GM10248 (cell line): ENCODE measurements at regions of chr5 and their contacts with region 1.

Region 1: GRCh38 chr5:171907725-171908343 is 98.6 kb downstream of the FBXW11 start:
- DNase-seq: peak; percentile 25
- CTCF ChIP-seq: peak; percentile 73

Region 2: DNA sequence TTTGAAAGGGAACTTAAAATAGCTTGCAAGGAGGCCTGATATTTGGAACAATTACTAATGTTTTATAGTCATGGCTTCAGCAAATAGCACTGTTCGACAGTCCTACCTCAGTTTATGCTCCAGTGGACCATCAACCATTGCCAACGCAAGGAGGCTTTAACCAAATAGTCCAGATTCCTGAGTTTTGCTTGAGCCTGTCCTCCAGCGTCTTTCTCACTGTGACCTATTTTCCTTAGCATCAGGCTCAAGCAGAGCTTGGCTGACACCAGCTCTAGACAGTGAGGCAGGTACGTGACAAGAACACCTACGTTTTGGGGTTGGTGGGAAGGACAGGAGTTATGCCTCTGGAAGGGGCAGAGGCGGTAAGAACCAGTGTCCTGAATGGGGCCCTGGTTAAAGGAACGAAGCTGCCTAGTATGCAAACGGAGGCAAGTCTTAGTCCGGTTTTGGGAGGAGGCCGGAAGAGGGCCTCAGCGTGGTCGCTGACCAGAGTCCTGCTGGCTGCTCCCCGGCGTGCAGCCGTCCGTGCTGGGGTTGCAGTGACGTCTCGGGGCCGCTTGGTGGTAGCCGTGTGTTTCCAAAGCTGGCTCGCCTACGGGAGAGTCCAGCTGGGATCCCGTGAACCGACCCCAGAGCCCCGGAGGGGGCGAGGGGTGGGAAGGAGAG is 489.4 kb before region 1 on chr5:
- CTCF ChIA-PET with region 1: interaction called, 35 read pairs
- POLR2A ChIA-PET with region 1: no interaction called
- DNase-seq: peak; percentile 88
- CTCF ChIP-seq: peak; percentile 95

Region 3: GRCh38 chr5:171484460-171484899 is 423.4 kb before region 1 on chr5:
- CTCF ChIA-PET with region 1: interaction called, 13 read pairs
- POLR2A ChIA-PET with region 1: no interaction called
- DNase-seq: peak; percentile 72
- CTCF ChIP-seq: peak; percentile 63

Region 4: DNA sequence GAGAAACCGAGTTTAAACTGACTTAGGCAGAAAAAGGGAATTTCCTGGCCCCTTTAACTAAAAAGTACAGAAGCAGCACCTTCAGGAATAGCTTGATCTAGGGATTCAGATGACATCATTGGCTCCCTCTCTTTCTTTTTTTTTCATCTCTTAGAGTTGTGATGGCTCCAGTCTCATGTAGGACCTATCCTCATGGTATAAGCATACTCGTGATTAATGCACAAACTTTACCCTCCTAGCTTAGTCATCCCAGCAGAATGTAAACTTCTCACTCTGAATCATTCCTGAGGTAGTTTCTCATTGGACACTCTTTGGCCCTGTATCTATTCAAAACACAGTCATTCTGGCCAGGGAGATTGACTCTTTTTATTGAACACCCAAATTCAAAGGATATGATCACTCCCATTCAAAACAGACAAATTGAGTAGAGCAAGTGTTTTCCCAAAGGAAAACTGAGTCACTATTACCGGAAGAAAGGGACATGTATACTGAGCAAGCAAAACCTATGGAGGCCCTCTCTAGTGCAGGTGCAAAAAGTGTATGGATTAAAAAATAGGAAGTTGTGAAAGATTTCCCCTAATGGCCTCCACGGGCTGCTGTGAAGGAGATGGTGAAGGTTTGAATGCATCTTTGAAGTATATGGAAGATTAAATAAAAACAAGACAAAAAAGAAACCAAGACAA is 149.8 kb before region 1 on chr5:
- CTCF ChIA-PET with region 1: no interaction called
- POLR2A ChIA-PET with region 1: no interaction called
- DNase-seq: no peak
- CTCF ChIP-seq: no peak

Region 5: DNA sequence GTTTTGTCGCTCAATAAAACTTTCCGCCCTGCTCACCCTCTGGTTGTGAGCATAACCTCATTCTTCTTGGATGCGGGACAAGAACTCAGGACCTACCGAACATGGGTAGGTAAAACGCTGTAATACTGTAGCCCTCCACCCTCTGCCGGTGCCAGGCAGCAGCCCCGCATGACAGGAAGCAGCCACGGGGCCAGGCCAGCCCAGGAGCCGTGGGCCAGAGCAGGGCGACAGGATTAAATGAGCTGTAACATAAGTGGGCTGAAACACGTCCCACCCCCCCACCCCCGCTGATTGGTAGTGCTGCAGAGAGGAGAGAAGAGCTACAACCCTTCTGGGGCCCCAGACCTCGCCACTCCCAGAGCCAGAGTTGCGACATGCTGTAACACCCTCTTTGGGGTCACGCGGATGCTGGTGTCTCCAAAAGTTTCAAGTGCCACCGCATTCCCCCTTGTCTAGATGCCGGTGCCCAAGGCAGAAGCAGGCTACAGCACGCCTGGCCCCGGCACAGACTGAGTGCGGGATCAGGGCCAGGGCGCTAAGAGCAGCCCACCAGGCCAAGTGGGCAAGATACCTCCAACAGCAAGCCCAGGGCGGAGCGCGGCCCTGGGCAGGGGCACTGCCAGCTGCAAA is 16.8 kb after region 1 on chr5:
- CTCF ChIA-PET with region 1: interaction called, 43 read pairs
- POLR2A ChIA-PET with region 1: no interaction called
- DNase-seq: no peak
- CTCF ChIP-seq: no peak

Region 6: DNA sequence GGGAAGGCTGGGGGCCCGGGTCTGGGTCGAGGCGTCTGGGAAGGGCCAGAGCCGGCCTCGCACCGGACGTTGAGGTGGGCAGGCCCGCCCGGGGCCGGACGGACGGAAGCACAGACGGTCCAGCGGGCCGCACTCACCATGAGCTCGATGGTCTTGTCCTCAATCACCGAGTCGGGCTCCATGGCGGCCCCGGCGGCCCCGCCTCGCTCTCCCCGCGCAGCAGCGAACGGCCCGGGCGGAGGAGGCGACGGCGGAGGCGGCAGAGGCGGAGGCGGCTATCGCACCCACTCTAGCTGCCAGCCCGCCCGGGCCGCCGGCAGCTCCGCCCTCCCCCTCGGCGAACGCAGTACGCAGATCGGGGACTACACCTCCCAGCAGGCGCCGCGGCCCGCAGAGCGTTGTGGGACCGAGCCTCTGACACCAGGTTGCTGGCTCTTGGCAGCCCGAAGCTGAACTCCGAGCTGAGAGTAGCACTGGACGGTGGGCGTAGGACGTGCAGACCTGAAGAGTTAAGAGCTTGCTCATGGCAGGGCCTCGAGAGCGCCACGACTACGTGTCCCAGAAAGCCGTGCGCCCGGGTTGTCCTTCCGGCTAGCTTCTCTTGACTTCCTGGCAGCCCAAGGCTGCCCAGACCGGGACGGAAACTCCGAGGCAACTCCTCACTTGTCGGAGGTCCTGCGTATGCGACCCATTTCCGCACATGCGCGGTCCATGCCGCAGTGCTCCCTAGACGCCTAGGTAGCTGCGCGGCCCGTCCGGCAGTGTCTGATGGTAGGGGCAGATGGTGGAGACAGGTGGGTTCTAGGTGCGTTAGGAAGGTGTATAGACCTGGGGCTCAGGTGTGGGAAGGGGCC is 98.7 kb after region 1 on chr5 and contains the start of gene FBXW11:
- CTCF ChIA-PET with region 1: interaction called, 42 read pairs
- POLR2A ChIA-PET with region 1: no interaction called
- DNase-seq: peak; percentile 96
- CTCF ChIP-seq: no peak

Region 7: GRCh38 chr5:172035039-172035438 is 127.2 kb after region 1 on chr5:
- CTCF ChIA-PET with region 1: interaction called, 80 read pairs
- POLR2A ChIA-PET with region 1: no interaction called
- DNase-seq: peak; percentile 74
- CTCF ChIP-seq: no peak